Transverse colon (tissue), 4 donors: ENCODE measurements at regions of chr3 and their contacts with region 1.

Region 1: DNA sequence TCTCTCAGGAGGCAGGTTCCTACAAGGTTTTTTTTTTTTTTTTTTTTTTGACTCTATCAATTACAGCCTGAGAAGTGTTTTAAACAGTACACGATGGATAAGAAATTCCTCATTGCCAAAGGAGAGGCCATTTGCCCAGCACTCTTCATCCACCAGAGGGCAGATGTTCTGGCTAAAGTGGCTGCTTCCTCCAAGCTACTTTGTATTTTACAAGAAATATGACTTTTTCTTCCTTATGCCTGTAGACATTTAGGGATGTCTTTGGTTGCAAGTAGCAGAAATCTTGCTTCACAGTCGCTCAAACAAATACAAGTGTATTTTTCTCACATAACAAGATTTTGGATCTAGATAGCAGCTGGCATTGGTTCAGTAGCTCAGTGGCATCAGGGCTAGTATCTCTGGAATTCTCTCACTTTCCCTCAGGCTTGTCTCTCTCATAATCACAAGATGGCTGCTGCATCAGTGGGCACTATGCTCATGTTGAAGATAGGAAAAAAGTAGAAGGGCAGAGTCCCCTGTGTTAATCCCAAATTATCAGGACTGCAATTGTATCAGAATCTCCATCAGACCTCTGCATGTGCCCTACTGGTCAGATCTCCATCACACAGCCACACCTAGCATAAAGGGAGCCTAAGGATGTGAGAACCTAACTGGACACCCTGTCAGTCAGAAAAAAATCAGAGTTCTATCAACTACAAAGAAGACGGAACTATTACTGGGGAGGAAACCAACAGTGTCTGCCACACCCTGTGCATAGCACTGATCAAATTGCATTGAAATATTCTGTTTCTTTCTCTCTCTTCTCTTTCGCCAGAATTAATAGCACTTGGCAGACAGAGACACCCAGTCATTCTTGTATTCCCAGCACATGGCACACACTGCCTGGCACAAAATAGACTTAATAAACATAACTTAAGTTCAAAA is 138.9 kb upstream of the COL8A1 start:
- DNase-seq: no peak
- H3K4me3 ChIP-seq: no peak overlapping the region
- H3K27ac ChIP-seq: no peak overlapping the region
- H3K4me1 ChIP-seq: peaks cover 0 to 14% (median 2%) of the 10 kb centered on the region in 4 donors
- H3K27me3 ChIP-seq: no peaks in the 10 kb centered on the region
- CTCF ChIP-seq: peak; percentile 37 to 69 (median 53)
- EP300 ChIP-seq: no peak
- POLR2A ChIP-seq: no peak

Region 2: GRCh38 chr3:99394831-99395778 is 104.4 kb before region 1 on chr3:
- in situ Hi-C with region 1: loop called in 1 of 4 experiments (anchors 25 kb)
- intact Hi-C with region 1: no loop called
- DNase-seq: no peak
- H3K4me3 ChIP-seq: no peak overlapping the region
- H3K27ac ChIP-seq: no peak overlapping the region
- H3K4me1 ChIP-seq: no peaks in the 10 kb centered on the region
- H3K27me3 ChIP-seq: no peaks in the 10 kb centered on the region
- CTCF ChIP-seq: no peak
- EP300 ChIP-seq: no peak
- POLR2A ChIP-seq: no peak

Region 3: GRCh38 chr3:99607151-99607550 is 107.7 kb after region 1 on chr3:
- in situ Hi-C with region 1: no loop called
- intact Hi-C with region 1: no loop called
- DNase-seq: no peak
- H3K4me3 ChIP-seq: no peak overlapping the region
- H3K27ac ChIP-seq: no peak overlapping the region
- H3K4me1 ChIP-seq: no peaks in the 10 kb centered on the region
- H3K27me3 ChIP-seq: no peaks in the 10 kb centered on the region
- CTCF ChIP-seq: no peak
- EP300 ChIP-seq: no peak
- POLR2A ChIP-seq: no peak

Region 4: DNA sequence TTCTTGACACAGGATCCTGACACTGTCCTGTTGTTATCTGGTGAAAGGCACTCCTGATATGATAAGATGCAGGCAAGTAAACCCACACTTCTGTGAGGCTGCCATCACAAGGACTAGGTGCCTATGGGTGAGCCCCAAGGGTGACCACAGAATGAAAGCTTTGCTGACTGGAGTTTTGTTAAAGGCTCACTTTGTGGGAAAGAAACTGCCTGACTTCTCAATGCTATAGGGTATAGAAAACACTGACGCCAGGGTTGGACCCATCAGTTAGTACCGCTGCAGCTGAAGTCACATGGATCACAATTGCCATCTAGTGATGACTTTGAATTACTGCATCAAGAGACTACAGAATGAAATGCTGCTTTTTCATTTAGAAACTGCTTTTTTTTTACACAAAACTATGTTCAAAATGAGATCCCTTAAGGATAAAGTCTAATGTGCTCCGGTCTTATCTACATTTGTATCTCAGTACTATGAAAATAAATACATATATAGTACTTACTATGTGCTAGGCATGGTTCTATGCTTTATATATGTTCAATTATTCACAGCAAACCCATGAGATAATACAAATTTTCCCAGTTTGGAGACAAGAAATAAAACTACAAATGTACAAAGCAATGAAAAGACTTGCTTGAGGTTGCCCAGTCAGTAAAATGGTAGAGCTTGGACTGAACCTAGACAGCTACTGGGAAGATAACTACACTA is 253.9 kb after region 1 on chr3:
- in situ Hi-C with region 1: loop called in 1 of 4 experiments (anchors 10 kb)
- intact Hi-C with region 1: no loop called
- DNase-seq: no peak
- H3K4me3 ChIP-seq: no peak overlapping the region
- H3K27ac ChIP-seq: no peak overlapping the region
- H3K4me1 ChIP-seq: no peaks in the 10 kb centered on the region
- H3K27me3 ChIP-seq: no peaks in the 10 kb centered on the region
- CTCF ChIP-seq: peak; percentile 45 to 64 (median 61)
- EP300 ChIP-seq: no peak
- POLR2A ChIP-seq: no peak